OCI-LY7 (cell line): ENCODE measurements at regions of chr1 and their contacts with region 1.

Region 1: GRCh38 chr1:31977385-31978131 is 36.1 kb upstream of the KHDRBS1 start:
- DNase-seq: peak; percentile 55
- H3K4me3 ChIP-seq: no peak overlapping the region
- H3K27ac ChIP-seq: no peak overlapping the region
- H3K4me1 ChIP-seq: peaks cover 24% of the 10 kb centered on the region
- CTCF ChIP-seq: peak; percentile 71

Region 2: DNA sequence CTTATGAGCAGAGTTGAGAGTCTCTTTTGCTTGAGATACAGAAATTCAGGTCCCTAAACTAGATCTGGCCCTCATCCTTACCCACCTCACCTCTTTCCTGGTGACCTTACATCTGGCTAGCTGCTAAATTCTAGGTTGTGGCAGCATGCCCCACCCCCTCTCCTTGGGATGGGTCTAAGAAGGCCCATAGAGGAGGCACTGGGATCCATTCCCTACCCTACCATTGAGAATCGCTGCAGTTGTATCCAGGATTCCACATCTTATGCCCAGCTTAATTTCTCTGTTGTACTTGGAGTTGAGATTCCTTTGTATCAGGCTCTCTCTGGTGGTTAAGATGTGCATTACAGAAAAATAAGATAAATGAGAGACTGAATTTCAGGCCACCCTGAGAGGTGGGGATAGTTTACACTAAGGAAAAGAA is 85.7 kb after region 1 on chr1:
- CTCF ChIA-PET with region 1: no interaction called
- POLR2A ChIA-PET with region 1: interaction called, 6 read pairs
- intact Hi-C with region 1: loop called (anchors 2 kb)
- DNase-seq: peak; percentile 61
- H3K4me3 ChIP-seq: no peak overlapping the region
- H3K27ac ChIP-seq: no peak overlapping the region
- H3K4me1 ChIP-seq: peaks cover 6% of the 10 kb centered on the region
- CTCF ChIP-seq: peak; percentile 83